Left cardiac atrium (tissue), 4 donors: ENCODE measurements at regions of chr7 and their contacts with region 1.

Region 1: GRCh38 chr7:121994625-121995410 is 121.9 kb downstream of the PTPRZ1 start:
- DNase-seq: peak; percentile 45
- ATAC-seq: peak; percentile 82 to 90

Region 2: GRCh38 chr7:121366852-121367431 is 627.9 kb before region 1 on chr7:
- intact Hi-C with region 1: loop called in 1 of 2 experiments (anchors 5 kb)
- DNase-seq: no peak
- ATAC-seq: no peak

Region 3: GRCh38 chr7:121605317-121605680 is 389.5 kb before region 1 on chr7:
- intact Hi-C with region 1: loop called in 1 of 2 experiments (anchors 2 kb)
- DNase-seq: no peak
- ATAC-seq: peak in 1 of 2 donors; percentile 53

Region 4: DNA sequence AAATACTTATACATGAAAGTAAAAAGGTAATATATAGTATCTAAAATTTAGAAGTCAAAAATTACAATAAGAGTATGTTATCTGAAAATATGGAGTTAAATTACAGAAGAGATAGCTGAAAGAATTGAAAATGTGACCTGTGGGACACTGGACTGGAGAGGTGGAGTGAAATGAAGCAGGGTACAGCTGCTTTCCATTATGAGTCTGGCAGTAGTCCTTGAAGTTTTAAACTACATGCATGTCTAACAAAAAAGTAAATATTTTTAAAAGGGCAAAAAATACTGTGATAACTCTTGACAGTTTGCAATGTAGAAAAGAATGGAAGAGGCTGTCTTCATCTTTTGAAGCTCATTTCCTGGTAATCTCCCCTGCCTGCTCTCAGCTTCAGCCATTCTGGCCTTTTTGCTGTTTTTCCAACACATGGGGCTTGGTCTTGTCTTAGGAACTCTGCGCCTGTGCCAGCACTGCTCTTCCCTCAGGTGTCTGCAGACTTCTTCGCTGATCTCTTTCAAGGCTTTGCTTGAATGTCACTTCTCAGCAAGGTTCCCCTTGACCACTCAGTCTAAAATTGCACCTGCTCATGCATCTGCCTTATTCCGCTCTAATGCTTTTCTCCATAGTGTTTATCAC is 85.0 kb before region 1 on chr7:
- intact Hi-C with region 1: no loop called
- DNase-seq: no peak
- ATAC-seq: no peak

Region 5: GRCh38 chr7:121961089-121961867 is 33.5 kb before region 1 on chr7:
- intact Hi-C with region 1: no loop called
- DNase-seq: no peak
- ATAC-seq: peak in 1 of 2 donors; percentile 82

Region 6: GRCh38 chr7:122219253-122219865 is 224.5 kb after region 1 on chr7:
- intact Hi-C with region 1: no loop called
- DNase-seq: no peak
- ATAC-seq: no peak